GM12878 (cell line): ENCODE measurements at regions of chr10 and their contacts with region 1.

Region 1: DNA sequence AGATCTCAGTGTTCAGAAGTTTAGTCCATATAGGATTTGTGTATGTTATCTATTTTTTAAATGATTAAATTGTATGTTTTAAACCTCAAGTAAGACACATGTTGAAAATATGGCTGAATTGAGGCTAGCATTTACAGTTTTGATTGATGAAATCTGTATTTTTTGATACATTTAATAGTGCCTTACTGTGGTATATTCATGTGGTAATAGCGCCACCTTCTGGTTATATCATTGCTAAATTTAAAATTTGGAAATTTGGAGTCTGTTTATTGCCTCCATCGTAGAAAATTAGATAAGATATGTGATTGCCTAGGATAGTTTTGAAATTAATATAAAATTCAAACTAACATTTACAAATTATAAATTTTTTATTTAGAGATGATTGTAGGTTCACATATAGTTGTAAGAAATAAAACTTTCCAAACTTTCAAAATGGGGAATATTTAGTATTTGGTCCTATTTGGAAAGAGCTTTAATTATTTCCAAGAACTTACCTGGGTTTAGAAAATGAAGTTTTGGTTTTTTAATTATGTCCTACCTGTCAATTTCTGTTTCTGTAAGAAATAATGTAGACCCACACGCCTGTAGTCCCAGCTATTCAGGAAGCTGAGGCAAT is 19.1 kb upstream of the ARMS2 start:
- DNase-seq: no peak
- ATAC-seq: peak; percentile 47; the same call in 1 of the 3 replicates
- H3K4me3 ChIP-seq: no peak overlapping the region
- H3K27ac ChIP-seq: no peak overlapping the region
- H3K4me1 ChIP-seq: no peaks in the 10 kb centered on the region
- H3K27me3 ChIP-seq: no peaks in the 10 kb centered on the region
- CTCF ChIP-seq: peak; percentile 30 to 59 (median 40); a peak in 5 of 6 replicates
- EP300 ChIP-seq: no peak
- POLR2A ChIP-seq: no peak
- RAD21 ChIP-seq: peak; percentile 81

Region 2: GRCh38 chr10:121873236-121873635 is 562.1 kb before region 1 on chr10:
- CTCF ChIA-PET with region 1: no interaction called
- POLR2A ChIA-PET with region 1: no interaction called
- RAD21 ChIA-PET with region 1: no interaction called
- SMC1A ChIA-PET with region 1: no interaction called
- in situ Hi-C with region 1: no loop called
- intact Hi-C with region 1: no loop called
- DNase-seq: no peak
- ATAC-seq: no peak
- H3K4me3 ChIP-seq: no peak overlapping the region
- H3K27ac ChIP-seq: no peak overlapping the region
- H3K4me1 ChIP-seq: no peaks in the 10 kb centered on the region
- H3K27me3 ChIP-seq: no peaks in the 10 kb centered on the region
- CTCF ChIP-seq: no peak
- EP300 ChIP-seq: no peak
- POLR2A ChIP-seq: no peak
- RAD21 ChIP-seq: no peak

Region 3: GRCh38 chr10:122267849-122268737 is 167.2 kb before region 1 on chr10:
- CTCF ChIA-PET with region 1: interaction called, 42 read pairs
- POLR2A ChIA-PET with region 1: no interaction called
- RAD21 ChIA-PET with region 1: no interaction called
- SMC1A ChIA-PET with region 1: interaction called, 4 read pairs
- in situ Hi-C with region 1: no loop called
- intact Hi-C with region 1: no loop called
- DNase-seq: no peak
- ATAC-seq: peak; percentile 97
- H3K4me3 ChIP-seq: no peak overlapping the region
- H3K27ac ChIP-seq: no peak overlapping the region
- H3K4me1 ChIP-seq: no peaks in the 10 kb centered on the region
- H3K27me3 ChIP-seq: no peaks in the 10 kb centered on the region
- CTCF ChIP-seq: peak; percentile 81 to 97 (median 95)
- EP300 ChIP-seq: no peak
- POLR2A ChIP-seq: no peak
- RAD21 ChIP-seq: peak; percentile 48

Region 4: DNA sequence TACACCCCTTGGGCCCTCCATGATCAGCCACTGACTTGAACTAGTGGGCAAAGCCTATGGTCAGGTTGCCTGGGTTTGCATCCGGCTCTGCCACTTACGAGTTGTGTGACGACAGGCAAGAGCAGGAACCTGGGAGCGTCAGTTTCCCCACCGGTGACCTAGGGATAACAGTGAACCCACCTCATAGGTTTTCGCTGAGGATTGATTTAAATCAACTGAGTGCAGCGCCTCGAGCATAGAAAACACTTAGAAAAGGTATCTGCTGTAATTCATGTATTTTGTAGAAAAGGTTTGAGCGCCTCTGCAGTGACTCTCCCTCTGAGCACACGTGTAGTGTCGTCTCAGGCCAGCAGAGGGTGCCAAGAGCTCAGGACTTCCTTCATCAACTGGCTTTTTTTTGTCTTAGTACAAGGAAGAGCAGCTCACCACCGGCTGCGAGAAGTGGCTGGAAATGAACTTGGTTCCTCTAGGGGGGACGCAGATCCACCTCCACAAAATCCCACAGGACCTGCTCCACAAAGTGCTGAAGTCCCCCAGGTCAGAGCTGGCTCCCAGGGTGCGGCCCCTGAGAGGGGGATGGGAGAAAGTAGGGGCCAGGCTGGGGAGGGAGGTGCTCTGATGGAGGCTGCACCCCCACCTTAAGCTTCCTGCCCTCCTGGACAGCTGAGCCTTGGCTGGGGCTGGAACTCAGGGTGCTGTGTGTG is 136.6 kb before region 1 on chr10:
- CTCF ChIA-PET with region 1: interaction called, 117 read pairs
- POLR2A ChIA-PET with region 1: no interaction called
- RAD21 ChIA-PET with region 1: interaction called, 46 read pairs
- SMC1A ChIA-PET with region 1: interaction called, 57 read pairs
- in situ Hi-C with region 1: loop called (anchors 5 kb)
- intact Hi-C with region 1: loop called (anchors 1 kb)
- DNase-seq: no peak
- ATAC-seq: peak; percentile 95
- H3K4me3 ChIP-seq: no peak overlapping the region
- H3K27ac ChIP-seq: no peak overlapping the region
- H3K4me1 ChIP-seq: peaks cover 5% of the 10 kb centered on the region
- H3K27me3 ChIP-seq: no peaks in the 10 kb centered on the region; a peak in 1 of 4 replicates
- CTCF ChIP-seq: peak; percentile 87 to 88 (median 87)
- EP300 ChIP-seq: no peak
- POLR2A ChIP-seq: no peak
- RAD21 ChIP-seq: peak; percentile 93

Region 5: DNA sequence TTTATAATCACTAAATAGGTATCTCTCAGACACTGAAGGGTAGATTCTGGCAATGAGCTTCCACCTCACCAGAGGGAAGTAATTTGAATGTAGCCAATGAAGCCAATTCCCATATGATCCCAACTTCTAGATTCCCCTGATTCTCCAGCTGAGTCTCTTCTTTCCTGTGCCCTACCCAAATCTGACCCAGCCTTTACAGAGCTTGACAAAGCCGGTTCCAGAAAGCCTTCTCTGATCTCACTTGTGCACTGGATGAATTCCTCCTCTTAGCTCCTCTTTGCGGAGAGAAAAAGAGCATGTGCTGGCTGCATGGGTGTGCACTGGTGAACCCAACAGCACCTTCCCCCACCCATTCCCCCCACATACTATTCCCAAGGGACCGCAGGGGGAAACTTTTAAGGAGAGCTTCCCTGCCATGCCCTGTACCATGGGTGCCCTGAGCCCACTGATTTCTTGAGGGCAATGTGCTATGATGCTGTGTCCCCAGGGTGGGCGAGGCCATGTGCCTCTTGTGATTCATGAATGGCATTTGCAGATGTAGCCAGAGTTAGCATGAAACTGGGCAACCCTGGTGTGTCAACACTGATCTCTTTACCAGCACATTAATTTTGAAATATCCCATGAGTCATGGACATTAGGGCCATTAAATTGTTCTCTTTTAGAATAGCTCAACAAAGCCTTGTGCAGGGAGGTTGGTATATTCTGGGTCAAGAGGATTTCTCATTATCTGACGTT is 111.2 kb before region 1 on chr10:
- CTCF ChIA-PET with region 1: interaction called, 10 read pairs
- POLR2A ChIA-PET with region 1: no interaction called
- RAD21 ChIA-PET with region 1: interaction called, 5 read pairs
- SMC1A ChIA-PET with region 1: interaction called, 9 read pairs
- in situ Hi-C with region 1: no loop called
- intact Hi-C with region 1: no loop called
- DNase-seq: no peak
- ATAC-seq: no peak
- H3K4me3 ChIP-seq: no peak overlapping the region
- H3K27ac ChIP-seq: no peak overlapping the region
- H3K4me1 ChIP-seq: peaks cover 4% of the 10 kb centered on the region
- H3K27me3 ChIP-seq: peaks cover 0 to 2% of the 10 kb centered on the region in 2 experiments; a peak in 2 of 4 replicates
- CTCF ChIP-seq: no peak
- EP300 ChIP-seq: no peak
- POLR2A ChIP-seq: no peak
- RAD21 ChIP-seq: no peak

Region 6: GRCh38 chr10:122413325-122413724 is 22.0 kb before region 1 on chr10:
- CTCF ChIA-PET with region 1: interaction called, 12 read pairs
- POLR2A ChIA-PET with region 1: no interaction called
- RAD21 ChIA-PET with region 1: interaction called, 3 read pairs
- SMC1A ChIA-PET with region 1: interaction called, 5 read pairs
- in situ Hi-C with region 1: no loop called
- intact Hi-C with region 1: no loop called
- DNase-seq: no peak
- ATAC-seq: no peak
- H3K4me3 ChIP-seq: no peak overlapping the region
- H3K27ac ChIP-seq: no peak overlapping the region
- H3K4me1 ChIP-seq: no peaks in the 10 kb centered on the region
- H3K27me3 ChIP-seq: no peaks in the 10 kb centered on the region
- CTCF ChIP-seq: no peak
- EP300 ChIP-seq: no peak
- POLR2A ChIP-seq: no peak
- RAD21 ChIP-seq: no peak

Region 7: DNA sequence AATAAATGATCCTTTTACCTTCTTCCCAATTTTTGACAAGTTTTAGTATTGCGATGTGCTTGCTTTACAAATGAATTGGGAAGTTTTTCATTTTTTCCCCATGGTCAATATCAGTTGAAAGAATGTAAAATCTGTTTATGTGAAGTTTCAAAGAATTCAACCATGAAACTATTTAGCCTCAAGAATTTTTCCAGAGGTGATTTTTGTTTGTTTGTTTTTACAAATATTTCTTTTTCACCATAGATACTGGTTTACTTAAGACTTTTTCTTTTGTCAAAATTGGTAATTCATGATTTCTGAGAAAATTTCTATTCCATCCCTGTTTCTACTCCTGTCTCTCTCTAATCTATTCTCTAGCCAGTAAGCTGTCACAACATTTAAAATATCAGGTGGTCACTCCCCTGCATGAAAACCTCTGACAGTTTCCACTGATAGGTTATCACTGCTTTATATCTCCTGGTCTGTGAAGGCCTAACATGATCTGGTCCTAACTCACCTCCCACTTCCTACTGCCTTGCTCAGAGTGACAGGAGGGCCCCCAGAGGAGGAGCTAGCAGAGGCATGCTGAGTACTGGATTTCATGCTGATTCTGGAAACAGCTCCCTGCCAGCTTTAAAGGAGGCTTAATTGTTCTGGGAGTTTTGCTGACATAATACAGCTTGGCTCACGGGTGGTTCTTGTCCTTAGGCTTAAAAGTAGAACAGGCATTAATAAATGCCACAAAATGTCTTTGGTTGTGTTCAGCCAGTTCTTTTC is 11.5 kb after region 1 on chr10:
- CTCF ChIA-PET with region 1: interaction called, 17 read pairs
- POLR2A ChIA-PET with region 1: no interaction called
- RAD21 ChIA-PET with region 1: no interaction called
- SMC1A ChIA-PET with region 1: interaction called, 3 read pairs
- in situ Hi-C with region 1: no loop called
- intact Hi-C with region 1: no loop called
- DNase-seq: no peak
- ATAC-seq: no peak
- H3K4me3 ChIP-seq: no peak overlapping the region
- H3K27ac ChIP-seq: no peak overlapping the region
- H3K4me1 ChIP-seq: no peaks in the 10 kb centered on the region
- H3K27me3 ChIP-seq: no peaks in the 10 kb centered on the region
- CTCF ChIP-seq: no peak
- EP300 ChIP-seq: no peak
- POLR2A ChIP-seq: no peak
- RAD21 ChIP-seq: no peak

Region 8: GRCh38 chr10:122590153-122590552 is 154.8 kb after region 1 on chr10:
- CTCF ChIA-PET with region 1: no interaction called
- POLR2A ChIA-PET with region 1: no interaction called
- RAD21 ChIA-PET with region 1: no interaction called
- SMC1A ChIA-PET with region 1: no interaction called
- in situ Hi-C with region 1: no loop called
- intact Hi-C with region 1: no loop called
- DNase-seq: no peak
- ATAC-seq: no peak
- H3K4me3 ChIP-seq: no peak overlapping the region
- H3K27ac ChIP-seq: no peak overlapping the region
- H3K4me1 ChIP-seq: no peaks in the 10 kb centered on the region
- H3K27me3 ChIP-seq: peaks cover 0 to 1% of the 10 kb centered on the region in 2 experiments; a peak in 1 of 4 replicates
- CTCF ChIP-seq: no peak
- EP300 ChIP-seq: no peak
- POLR2A ChIP-seq: no peak
- RAD21 ChIP-seq: no peak

Region 9: DNA sequence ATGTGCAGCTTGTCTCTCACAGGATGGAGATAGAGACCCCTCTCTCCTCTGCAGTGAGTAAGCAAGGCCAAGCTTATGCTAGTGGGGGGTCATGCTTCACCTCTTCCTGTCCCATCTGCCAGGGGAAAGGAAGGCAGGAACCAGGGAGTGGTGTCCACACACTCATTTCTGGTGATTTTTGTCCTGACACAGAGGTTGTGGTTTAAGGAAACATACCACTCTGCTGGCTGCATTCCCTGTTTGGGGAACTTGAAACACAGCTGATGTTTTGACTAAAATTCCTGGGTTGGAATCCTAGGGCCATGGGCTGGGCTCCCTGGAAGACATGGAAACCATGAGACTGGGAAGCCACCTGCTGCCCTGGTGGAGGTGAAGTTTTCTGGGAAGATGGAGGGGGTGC is 242.9 kb after region 1 on chr10:
- CTCF ChIA-PET with region 1: no interaction called
- POLR2A ChIA-PET with region 1: no interaction called
- RAD21 ChIA-PET with region 1: no interaction called
- SMC1A ChIA-PET with region 1: no interaction called
- in situ Hi-C with region 1: no loop called
- intact Hi-C with region 1: no loop called
- DNase-seq: no peak
- ATAC-seq: no peak
- H3K4me3 ChIP-seq: no peak overlapping the region
- H3K27ac ChIP-seq: no peak overlapping the region
- H3K4me1 ChIP-seq: no peaks in the 10 kb centered on the region
- H3K27me3 ChIP-seq: peaks cover 0 to 2% of the 10 kb centered on the region in 2 experiments; a peak in 1 of 4 replicates
- CTCF ChIP-seq: no peak
- EP300 ChIP-seq: no peak
- POLR2A ChIP-seq: no peak
- RAD21 ChIP-seq: no peak